ENCODE measurements at regions of chr2 and their contacts with region 1.

Region 1: GRCh38 chr2:135960656-135961551 is 24.5 kb downstream of the DARS1 start:
- DNase-seq: peak in 3 of 9 experiments; percentile 23 to 44 (median 27)
- ATAC-seq: peak; percentile 63
- H3K4me3 ChIP-seq: no peak overlapping the region
- H3K4me3 Mint-ChIP-seq: peak overlapping the region; percentile 35
- H3K27ac ChIP-seq: peak overlapping the region in 1 of 2 experiments; percentile 52
- H3K27ac Mint-ChIP-seq: peak overlapping the region; percentile 89
- H3K4me1 ChIP-seq: peaks cover 26% of the 10 kb centered on the region
- H3K4me1 Mint-ChIP-seq: peaks cover 50% of the 10 kb centered on the region
- H3K27me3 ChIP-seq: no peaks in the 10 kb centered on the region
- H3K27me3 Mint-ChIP-seq: no peaks in the 10 kb centered on the region
- CTCF ChIP-seq: no peak

Region 2: DNA sequence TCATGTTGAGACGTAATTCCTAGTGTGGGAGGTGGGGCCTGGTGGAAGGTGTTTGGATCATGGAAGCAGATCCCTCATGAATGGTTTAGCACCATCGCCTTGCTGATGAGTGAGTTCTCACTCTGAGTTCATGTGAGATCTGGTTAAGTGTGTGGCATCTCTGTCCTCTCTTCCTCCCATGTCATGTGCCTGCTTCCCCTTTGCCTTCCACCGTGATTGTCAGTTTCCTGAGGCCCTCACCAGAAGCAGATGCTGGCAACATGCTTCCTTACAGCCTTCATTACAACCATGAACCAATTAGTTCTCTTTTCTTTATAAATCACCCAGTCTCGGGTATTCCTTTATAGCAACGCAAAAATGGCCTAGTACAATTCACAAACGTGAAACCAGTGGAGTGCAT is 70.1 kb before region 1 on chr2:
- CTCF ChIA-PET with region 1: no interaction called
- POLR2A ChIA-PET with region 1: no interaction called
- intact Hi-C with region 1: no loop called
- DNase-seq: no peak
- ATAC-seq: no peak
- H3K4me3 ChIP-seq: no peak overlapping the region
- H3K4me3 Mint-ChIP-seq: no peak overlapping the region
- H3K27ac ChIP-seq: no peak overlapping the region
- H3K27ac Mint-ChIP-seq: no peak overlapping the region
- H3K4me1 ChIP-seq: no peaks in the 10 kb centered on the region
- H3K4me1 Mint-ChIP-seq: peaks cover 8% of the 10 kb centered on the region
- H3K27me3 ChIP-seq: no peaks in the 10 kb centered on the region
- H3K27me3 Mint-ChIP-seq: peaks cover 2% of the 10 kb centered on the region
- CTCF ChIP-seq: no peak

Region 3: DNA sequence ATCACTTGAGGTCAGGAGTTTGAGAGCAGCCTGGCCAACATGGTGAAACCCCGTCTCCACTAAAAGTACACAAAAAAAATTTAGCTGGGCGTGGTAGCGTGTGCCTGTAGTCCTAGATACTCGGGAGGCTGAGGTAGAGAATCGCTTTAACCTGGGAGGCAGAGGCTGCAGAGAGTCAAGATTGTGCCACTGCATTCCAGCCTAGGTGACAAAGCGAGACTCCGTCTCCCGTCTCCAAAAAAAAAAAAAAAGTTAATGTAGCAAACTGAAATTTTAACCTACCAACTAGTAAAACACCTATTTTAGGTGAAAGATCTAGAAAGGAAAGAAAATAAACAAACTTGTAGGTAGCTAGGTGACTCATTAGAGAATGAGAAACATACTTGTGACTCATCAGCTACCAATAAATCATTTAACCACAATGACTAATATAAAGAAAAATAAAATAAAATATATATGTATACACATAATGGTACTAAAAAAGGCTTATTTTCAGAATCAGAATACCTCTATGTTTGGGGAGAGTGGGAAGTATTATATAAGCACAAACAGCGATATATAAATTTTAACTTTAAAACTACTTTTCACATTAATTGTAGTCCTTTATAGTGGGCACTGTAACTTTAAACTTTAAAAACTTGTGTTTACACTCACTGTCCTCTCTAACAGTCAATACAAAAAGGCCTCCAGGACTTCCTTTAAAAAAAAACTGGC is 12.1 kb before region 1 on chr2:
- CTCF ChIA-PET with region 1: interaction called, 3 read pairs
- POLR2A ChIA-PET with region 1: interaction called, 3 read pairs
- intact Hi-C with region 1: loop called in 1 of 2 experiments (anchors 1 kb)
- DNase-seq: peak in 6 of 9 experiments; percentile 10 to 62 (median 25)
- ATAC-seq: peak; percentile 72
- H3K4me3 ChIP-seq: no peak overlapping the region
- H3K4me3 Mint-ChIP-seq: peak overlapping the region; percentile 37
- H3K27ac ChIP-seq: peak overlapping the region in 1 of 2 experiments; percentile 26
- H3K27ac Mint-ChIP-seq: peak overlapping the region; percentile 85
- H3K4me1 ChIP-seq: peaks cover 7% of the 10 kb centered on the region
- H3K4me1 Mint-ChIP-seq: peaks cover 61% of the 10 kb centered on the region
- H3K27me3 ChIP-seq: no peaks in the 10 kb centered on the region
- H3K27me3 Mint-ChIP-seq: no peaks in the 10 kb centered on the region
- CTCF ChIP-seq: no peak

Measured in CD8-positive, alpha-beta T cell (primary cell).